CD4-positive, alpha-beta T cell (primary cell): ENCODE measurements at regions of chr10 and their contacts with region 1.

Region 1: DNA sequence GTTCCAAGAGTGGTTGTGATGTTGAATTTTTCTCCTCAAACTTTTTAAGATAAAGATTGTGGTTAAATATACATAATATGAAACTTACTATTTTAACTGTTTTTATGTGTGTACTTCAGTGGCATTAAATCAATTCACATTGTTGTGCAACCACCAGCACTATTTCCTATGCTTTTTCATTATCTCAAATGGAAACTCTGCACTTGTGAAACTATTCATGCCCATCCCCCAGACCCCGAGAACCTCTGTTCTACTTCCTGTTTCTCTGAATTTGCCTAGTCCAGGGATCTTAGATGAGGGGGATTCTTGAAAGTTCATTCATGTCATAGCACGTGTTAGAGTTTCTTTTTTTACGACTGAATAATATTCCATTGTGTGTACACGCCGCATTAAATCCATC is 67.0 kb downstream of the WDR37 start:
- DNase-seq: peak in 1 of 14 experiments; percentile 5
- ATAC-seq: no peak
- H3K4me3 ChIP-seq: no peak overlapping the region
- H3K4me3 Mint-ChIP-seq: no peak overlapping the region
- H3K27ac ChIP-seq: no peak overlapping the region
- H3K27ac Mint-ChIP-seq: peak overlapping the region; percentile 68
- H3K4me1 ChIP-seq: peaks cover 12% of the 10 kb centered on the region
- H3K4me1 Mint-ChIP-seq: peaks cover 43% of the 10 kb centered on the region
- H3K27me3 ChIP-seq: no peaks in the 10 kb centered on the region
- H3K27me3 Mint-ChIP-seq: no peaks in the 10 kb centered on the region
- CTCF ChIP-seq: no peak

Region 2: GRCh38 chr10:819326-819725 is 303.9 kb before region 1 on chr10:
- CTCF ChIA-PET with region 1: no interaction called
- POLR2A ChIA-PET with region 1: no interaction called
- intact Hi-C with region 1: no loop called
- DNase-seq: no peak
- ATAC-seq: no peak
- H3K4me3 ChIP-seq: no peak overlapping the region
- H3K4me3 Mint-ChIP-seq: no peak overlapping the region
- H3K27ac ChIP-seq: no peak overlapping the region
- H3K27ac Mint-ChIP-seq: no peak overlapping the region
- H3K4me1 ChIP-seq: peaks cover 18% of the 10 kb centered on the region
- H3K4me1 Mint-ChIP-seq: peaks cover 24% of the 10 kb centered on the region
- H3K27me3 ChIP-seq: no peaks in the 10 kb centered on the region
- H3K27me3 Mint-ChIP-seq: no peaks in the 10 kb centered on the region
- CTCF ChIP-seq: no peak

Region 3: DNA sequence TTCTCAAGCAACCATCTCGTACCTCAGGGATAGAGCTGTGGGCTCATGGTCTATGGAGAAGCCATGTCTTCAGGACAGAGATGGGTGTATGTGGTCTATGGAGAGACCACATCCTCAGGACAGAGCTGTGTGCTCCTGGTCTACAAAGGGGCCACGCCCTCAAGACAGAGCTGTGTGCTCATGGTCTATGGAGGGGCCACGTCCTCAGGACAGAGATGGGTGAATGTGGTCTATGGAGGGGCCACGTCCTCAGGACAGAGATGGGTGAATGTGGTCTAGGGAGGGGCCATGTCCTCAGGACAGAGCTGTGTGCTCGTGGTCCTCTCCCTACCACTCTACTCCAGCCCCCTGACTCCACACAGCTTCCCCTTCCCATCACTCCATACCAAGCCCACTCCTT is 50.8 kb after region 1 on chr10:
- CTCF ChIA-PET with region 1: no interaction called
- POLR2A ChIA-PET with region 1: no interaction called
- intact Hi-C with region 1: loop called in 1 of 2 experiments (anchors 2 kb)
- DNase-seq: no peak
- ATAC-seq: no peak
- H3K4me3 ChIP-seq: no peak overlapping the region
- H3K4me3 Mint-ChIP-seq: no peak overlapping the region
- H3K27ac ChIP-seq: no peak overlapping the region
- H3K27ac Mint-ChIP-seq: no peak overlapping the region
- H3K4me1 ChIP-seq: no peaks in the 10 kb centered on the region
- H3K4me1 Mint-ChIP-seq: no peaks in the 10 kb centered on the region
- H3K27me3 ChIP-seq: no peaks in the 10 kb centered on the region
- H3K27me3 Mint-ChIP-seq: peaks cover 5% of the 10 kb centered on the region
- CTCF ChIP-seq: no peak

Region 4: DNA sequence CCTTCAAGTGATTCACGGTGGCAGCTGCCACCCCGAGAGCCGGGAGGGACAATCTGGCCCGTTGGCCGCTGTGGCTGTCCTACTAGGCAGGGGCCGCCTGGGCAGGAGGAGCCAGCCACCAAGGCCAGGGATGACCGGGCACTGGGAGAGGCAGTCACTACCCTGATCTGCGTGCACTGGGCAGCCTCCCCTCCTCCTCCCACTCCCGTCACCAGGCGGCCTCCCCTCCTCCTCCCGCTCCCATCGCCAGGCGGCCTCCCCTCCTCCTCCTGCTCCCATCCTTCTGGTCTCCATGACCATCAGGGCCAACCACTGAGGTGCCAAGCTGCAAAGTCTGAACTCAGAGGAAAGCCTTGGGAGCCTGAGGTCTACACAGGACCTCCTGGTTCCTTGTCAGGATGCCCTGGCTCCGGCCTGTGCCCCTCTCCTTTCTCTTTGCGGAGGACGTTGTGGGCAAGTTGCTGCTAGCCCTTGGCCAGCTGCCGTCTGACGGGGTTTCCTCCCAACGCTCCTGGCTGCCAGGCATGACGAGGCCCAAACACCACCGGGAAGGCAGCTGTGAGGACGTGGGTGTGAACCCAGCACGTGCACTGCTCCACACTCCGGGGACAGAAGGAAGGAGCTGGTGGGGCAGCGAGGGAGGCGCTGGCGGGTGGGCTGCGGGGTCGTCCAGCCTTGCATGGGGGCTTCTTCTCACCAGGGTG is 64.1 kb after region 1 on chr10:
- CTCF ChIA-PET with region 1: no interaction called
- POLR2A ChIA-PET with region 1: no interaction called
- intact Hi-C with region 1: no loop called
- DNase-seq: peak in 1 of 14 experiments; percentile 22
- ATAC-seq: no peak
- H3K4me3 ChIP-seq: no peak overlapping the region
- H3K4me3 Mint-ChIP-seq: no peak overlapping the region
- H3K27ac ChIP-seq: no peak overlapping the region
- H3K27ac Mint-ChIP-seq: no peak overlapping the region
- H3K4me1 ChIP-seq: no peaks in the 10 kb centered on the region
- H3K4me1 Mint-ChIP-seq: no peaks in the 10 kb centered on the region
- H3K27me3 ChIP-seq: no peaks in the 10 kb centered on the region
- H3K27me3 Mint-ChIP-seq: peaks cover 4% of the 10 kb centered on the region
- CTCF ChIP-seq: no peak